Natural killer cell (primary cell): ENCODE measurements at regions of chr6 and their contacts with region 1.

Region 1: GRCh38 chr6:109009236-109009961 is 85.2 kb downstream of the SESN1 start:
- DNase-seq: peak; percentile 93 to 97
- ATAC-seq: peak; percentile 92 to 98 (median 95)
- H3K4me3 ChIP-seq: peak overlapping the region; percentile 99
- H3K4me3 Mint-ChIP-seq: peak overlapping the region; percentile 97
- H3K27ac ChIP-seq: peak overlapping the region; percentile 95
- H3K27ac Mint-ChIP-seq: peak overlapping the region; percentile 90 to 99
- H3K4me1 ChIP-seq: peaks cover 12% of the 10 kb centered on the region
- H3K4me1 Mint-ChIP-seq: peaks cover 47 to 57% of the 10 kb centered on the region in 2 donors
- H3K27me3 ChIP-seq: no peaks in the 10 kb centered on the region
- H3K27me3 Mint-ChIP-seq: no peaks in the 10 kb centered on the region
- CTCF ChIP-seq: no peak

Region 2: DNA sequence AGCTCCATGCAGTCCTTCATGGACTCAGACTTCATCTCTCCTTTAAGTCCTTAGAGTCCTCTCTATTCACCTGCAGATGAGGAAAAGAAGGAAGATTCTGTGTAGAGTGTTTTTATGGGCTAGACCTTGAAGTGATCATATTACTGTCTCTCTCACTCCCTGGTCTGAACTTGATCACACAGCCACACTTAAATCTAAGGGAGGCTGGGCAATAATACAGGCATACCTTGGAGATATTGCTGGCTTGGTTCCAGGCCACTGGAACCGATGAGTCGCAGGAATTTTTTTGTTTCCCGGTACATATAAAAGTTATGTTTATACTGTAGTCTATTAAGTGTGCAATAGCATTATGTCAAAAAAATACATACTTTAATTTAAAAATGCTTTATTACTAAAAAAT is 507.8 kb before region 1 on chr6:
- intact Hi-C with region 1: no loop called
- DNase-seq: no peak
- ATAC-seq: no peak
- H3K4me3 ChIP-seq: no peak overlapping the region
- H3K4me3 Mint-ChIP-seq: no peak overlapping the region
- H3K27ac ChIP-seq: no peak overlapping the region
- H3K27ac Mint-ChIP-seq: no peak overlapping the region
- H3K4me1 ChIP-seq: no peaks in the 10 kb centered on the region
- H3K4me1 Mint-ChIP-seq: no peaks in the 10 kb centered on the region
- H3K27me3 ChIP-seq: no peaks in the 10 kb centered on the region
- H3K27me3 Mint-ChIP-seq: no peaks in the 10 kb centered on the region
- CTCF ChIP-seq: no peak

Region 3: DNA sequence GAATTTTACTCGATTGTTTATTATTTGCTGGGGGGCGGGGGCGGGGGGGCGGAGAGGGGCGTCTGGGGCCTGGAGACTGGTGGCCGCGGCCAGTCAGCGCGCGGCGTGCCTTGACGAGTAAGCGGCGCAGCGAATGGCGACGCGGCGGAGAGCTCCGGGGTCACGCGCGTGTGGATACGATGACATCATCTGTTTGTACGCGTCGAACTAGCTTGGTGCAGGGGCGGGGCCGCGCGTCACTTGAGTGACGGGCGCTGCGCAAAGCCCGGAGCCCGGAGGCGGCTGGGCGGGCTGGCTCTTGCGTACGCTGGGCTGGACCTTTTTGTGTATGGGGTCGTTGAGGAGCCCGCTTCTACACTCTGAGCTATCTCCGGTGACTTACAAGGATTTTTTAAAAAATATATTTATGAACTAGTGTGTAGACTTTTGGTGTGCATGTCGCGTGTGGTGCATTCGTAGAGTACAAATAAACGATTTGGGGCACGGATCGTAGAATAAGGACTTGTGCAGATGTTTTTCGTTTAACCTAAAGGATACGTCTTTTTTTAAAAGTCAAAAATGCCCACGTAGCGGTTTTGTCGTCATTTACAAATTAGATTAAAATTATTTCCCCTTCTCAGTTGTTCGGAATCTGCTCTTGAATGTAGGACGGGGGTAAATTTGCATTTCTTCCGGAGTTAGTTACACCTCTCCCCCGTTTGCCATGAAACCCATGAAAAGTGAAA is 450.9 kb before region 1 on chr6:
- intact Hi-C with region 1: loop called (anchors 5 kb)
- DNase-seq: peak; percentile 97 to 99
- ATAC-seq: peak; percentile 59 to 80 (median 66)
- H3K4me3 ChIP-seq: peak overlapping the region; percentile 96
- H3K4me3 Mint-ChIP-seq: peak overlapping the region; percentile 96
- H3K27ac ChIP-seq: peak overlapping the region; percentile 100
- H3K27ac Mint-ChIP-seq: peak overlapping the region; percentile 97 to 98
- H3K4me1 ChIP-seq: peaks cover 21% of the 10 kb centered on the region
- H3K4me1 Mint-ChIP-seq: peaks cover 20 to 27% of the 10 kb centered on the region in 2 donors
- H3K27me3 ChIP-seq: no peaks in the 10 kb centered on the region
- H3K27me3 Mint-ChIP-seq: no peaks in the 10 kb centered on the region
- CTCF ChIP-seq: no peak

Region 4: GRCh38 chr6:108835218-108835850 is 174.1 kb before region 1 on chr6:
- intact Hi-C with region 1: loop called (anchors 5 kb)
- DNase-seq: peak; percentile 80 to 92
- ATAC-seq: peak; percentile 77 to 92 (median 78)
- H3K4me3 ChIP-seq: no peak overlapping the region
- H3K4me3 Mint-ChIP-seq: peak overlapping the region; percentile 32
- H3K27ac ChIP-seq: no peak overlapping the region
- H3K27ac Mint-ChIP-seq: peak overlapping the region; percentile 2 to 31
- H3K4me1 ChIP-seq: peaks cover 29% of the 10 kb centered on the region
- H3K4me1 Mint-ChIP-seq: peaks cover 41 to 46% of the 10 kb centered on the region in 2 donors
- H3K27me3 ChIP-seq: no peaks in the 10 kb centered on the region
- H3K27me3 Mint-ChIP-seq: no peaks in the 10 kb centered on the region
- CTCF ChIP-seq: peak; percentile 94

Region 5: DNA sequence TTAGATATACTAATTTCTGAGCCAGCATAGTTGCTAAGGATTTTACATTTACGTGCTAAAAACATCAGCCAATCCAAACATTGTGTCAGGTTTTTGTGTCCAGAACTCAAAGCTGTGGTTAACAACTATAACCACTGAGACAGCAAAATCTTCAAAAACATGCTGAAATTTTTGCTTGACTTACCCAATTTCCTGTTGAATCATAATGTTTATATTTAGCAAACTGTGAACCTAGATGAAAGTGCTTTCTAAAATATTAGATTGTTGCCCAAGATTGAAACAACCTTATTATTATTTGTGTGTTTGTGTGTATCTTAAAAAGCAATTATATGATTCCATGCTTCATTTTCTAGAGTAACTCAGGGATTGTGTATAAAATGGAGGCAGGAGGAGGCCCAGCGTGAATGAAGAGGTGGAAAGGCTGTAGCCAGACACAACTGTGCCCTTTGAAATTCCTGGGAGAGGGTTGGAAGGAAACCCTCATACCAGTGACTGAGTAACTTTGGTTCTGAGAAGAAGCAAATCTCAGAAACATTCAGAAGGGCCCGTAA is 113.2 kb before region 1 on chr6:
- intact Hi-C with region 1: loop called (anchors 5 kb)
- DNase-seq: peak in 1 of 2 donors; percentile 77
- ATAC-seq: peak; percentile 81 to 90 (median 86)
- H3K4me3 ChIP-seq: no peak overlapping the region
- H3K4me3 Mint-ChIP-seq: peak overlapping the region; percentile 94
- H3K27ac ChIP-seq: peak overlapping the region; percentile 91
- H3K27ac Mint-ChIP-seq: peak overlapping the region; percentile 91 to 95
- H3K4me1 ChIP-seq: peaks cover 39% of the 10 kb centered on the region
- H3K4me1 Mint-ChIP-seq: peaks cover 39 to 43% of the 10 kb centered on the region in 2 donors
- H3K27me3 ChIP-seq: no peaks in the 10 kb centered on the region
- H3K27me3 Mint-ChIP-seq: no peaks in the 10 kb centered on the region
- CTCF ChIP-seq: no peak

Region 6: GRCh38 chr6:108944707-108945680 is 64.4 kb before region 1 on chr6:
- intact Hi-C with region 1: loop called (anchors 5 kb)
- DNase-seq: no peak
- ATAC-seq: no peak
- H3K4me3 ChIP-seq: no peak overlapping the region
- H3K4me3 Mint-ChIP-seq: no peak overlapping the region
- H3K27ac ChIP-seq: no peak overlapping the region
- H3K27ac Mint-ChIP-seq: peak overlapping the region; percentile 20 to 89
- H3K4me1 ChIP-seq: peaks cover 32% of the 10 kb centered on the region
- H3K4me1 Mint-ChIP-seq: peaks cover 38 to 41% of the 10 kb centered on the region in 2 donors
- H3K27me3 ChIP-seq: no peaks in the 10 kb centered on the region
- H3K27me3 Mint-ChIP-seq: no peaks in the 10 kb centered on the region
- CTCF ChIP-seq: no peak

Region 7: DNA sequence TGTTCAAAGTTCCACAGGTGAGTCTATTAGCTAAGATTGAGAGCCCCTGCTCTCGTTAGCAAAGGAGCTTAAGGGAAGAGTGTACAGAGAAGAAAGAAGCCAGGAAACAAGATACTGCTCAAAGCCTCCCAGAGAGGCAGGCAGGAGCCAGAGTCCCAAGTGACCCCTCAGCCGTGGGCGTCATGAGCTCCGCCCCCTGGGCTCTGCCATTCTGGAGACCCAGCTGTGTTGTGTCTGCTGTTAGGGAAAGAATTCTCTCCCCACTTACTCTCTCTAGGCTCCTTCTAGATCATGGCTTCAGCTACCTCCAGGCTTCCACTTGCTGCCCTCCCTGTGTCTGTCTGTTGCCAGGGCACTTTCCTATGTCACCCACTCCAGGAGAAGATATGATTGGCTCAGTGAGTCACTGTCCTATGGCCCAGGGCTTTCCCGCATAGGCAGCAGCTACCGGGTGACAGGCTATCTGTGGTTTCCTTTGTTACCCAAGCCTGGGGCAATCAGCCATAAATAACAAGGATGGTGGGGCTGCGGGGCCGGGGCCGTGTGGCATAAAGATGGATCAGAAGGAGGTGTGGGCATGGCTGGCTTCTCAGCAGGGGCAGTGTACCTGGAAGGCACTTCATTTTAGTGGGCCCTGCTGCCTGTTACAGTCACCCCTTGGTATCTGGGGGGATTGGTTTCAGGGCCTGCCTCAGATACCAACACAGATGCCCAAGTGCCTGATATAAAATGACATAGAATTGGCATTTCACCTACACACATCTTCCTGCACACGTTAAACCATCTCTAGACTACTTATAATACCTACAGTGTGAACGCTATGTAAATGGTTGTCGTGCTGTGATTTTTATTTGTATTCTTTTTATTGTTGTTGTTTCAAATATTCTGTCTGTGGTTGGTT is 42.3 kb before region 1 on chr6:
- intact Hi-C with region 1: loop called (anchors 5 kb)
- DNase-seq: peak; percentile 52 to 53
- ATAC-seq: peak; percentile 89 to 95 (median 92)
- H3K4me3 ChIP-seq: no peak overlapping the region
- H3K4me3 Mint-ChIP-seq: peak overlapping the region; percentile 62
- H3K27ac ChIP-seq: peak overlapping the region; percentile 54
- H3K27ac Mint-ChIP-seq: peak overlapping the region; percentile 59 to 88
- H3K4me1 ChIP-seq: peaks cover 47% of the 10 kb centered on the region
- H3K4me1 Mint-ChIP-seq: peaks cover 40 to 46% of the 10 kb centered on the region in 2 donors
- H3K27me3 ChIP-seq: no peaks in the 10 kb centered on the region
- H3K27me3 Mint-ChIP-seq: no peaks in the 10 kb centered on the region
- CTCF ChIP-seq: no peak

Region 8: DNA sequence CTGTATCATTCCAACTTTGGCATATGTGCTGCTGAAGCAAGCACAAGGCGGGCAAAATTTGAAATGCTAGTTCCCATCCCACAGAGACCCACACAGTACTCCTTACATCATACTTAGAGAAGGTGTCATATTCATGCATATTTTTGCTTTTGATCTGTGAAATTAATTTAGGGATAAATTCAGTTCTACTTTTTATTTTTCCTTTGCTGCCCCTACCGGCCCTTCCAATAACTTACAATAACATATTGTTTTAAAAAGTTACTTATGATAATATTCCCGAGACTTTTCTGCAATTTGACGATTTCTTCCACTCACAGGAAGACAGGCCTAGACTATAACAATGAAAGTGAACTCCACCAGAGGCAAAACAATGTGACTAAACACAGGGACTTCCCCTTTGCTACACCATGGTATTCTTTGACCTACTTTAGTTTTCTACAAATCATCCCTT is 50.2 kb after region 1 on chr6:
- intact Hi-C with region 1: loop called (anchors 1 kb)
- DNase-seq: peak in 1 of 2 donors; percentile 79
- ATAC-seq: peak; percentile 97 to 99 (median 98)
- H3K4me3 ChIP-seq: no peak overlapping the region
- H3K4me3 Mint-ChIP-seq: peak overlapping the region; percentile 57
- H3K27ac ChIP-seq: peak overlapping the region; percentile 85
- H3K27ac Mint-ChIP-seq: peak overlapping the region; percentile 94 to 95
- H3K4me1 ChIP-seq: peaks cover 13% of the 10 kb centered on the region
- H3K4me1 Mint-ChIP-seq: peaks cover 42 to 48% of the 10 kb centered on the region in 2 donors
- H3K27me3 ChIP-seq: no peaks in the 10 kb centered on the region
- H3K27me3 Mint-ChIP-seq: no peaks in the 10 kb centered on the region
- CTCF ChIP-seq: no peak